ENCODE measurements at regions of chr17 and their contacts with region 1.

Region 1: GRCh38 chr17:48878918-48879898 is 13.4 kb upstream of the ATP5MC1 start:
- DNase-seq: peak; percentile 81
- H3K27ac ChIP-seq: no peak overlapping the region
- CTCF ChIP-seq: peak; percentile 95

Region 2: DNA sequence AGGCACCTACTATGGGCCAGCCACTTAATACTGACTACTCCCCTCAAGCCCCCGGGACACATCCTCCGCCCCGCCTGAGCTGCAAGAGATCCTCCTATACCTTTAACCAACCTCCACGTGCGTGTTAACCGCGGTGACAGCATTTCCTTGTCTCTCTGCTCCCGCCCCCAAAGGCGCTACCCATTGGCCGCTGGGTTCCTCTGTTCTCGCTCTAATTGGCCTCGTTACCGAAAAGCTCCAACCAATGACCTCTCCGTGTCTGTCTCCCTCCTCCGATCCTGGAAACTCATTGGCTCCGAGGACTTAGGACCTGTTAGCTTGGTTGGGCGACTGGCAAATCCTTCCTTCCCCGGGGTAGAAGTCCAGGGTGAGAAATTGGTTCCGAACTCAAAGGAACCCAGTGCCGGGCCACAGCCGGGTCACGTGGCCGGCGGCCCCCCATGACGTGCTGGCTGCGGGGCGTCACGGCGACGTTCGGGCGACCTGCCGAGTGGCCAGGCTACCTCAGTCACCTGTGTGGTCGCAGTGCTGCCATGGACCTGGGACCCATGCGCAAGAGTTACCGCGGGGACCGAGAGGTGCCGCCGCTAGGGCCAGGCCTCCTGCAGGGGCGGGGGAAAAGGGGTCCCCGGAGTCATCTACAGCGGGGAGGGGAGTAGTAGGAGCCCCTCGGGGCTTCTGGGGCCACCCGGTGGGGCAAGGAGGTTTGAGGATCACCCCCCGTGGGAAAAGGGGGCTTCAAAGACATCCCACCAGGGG is 937.8 kb before region 1 on chr17 and contains the start of gene PNPO:
- CTCF ChIA-PET with region 1: no interaction called
- POLR2A ChIA-PET with region 1: no interaction called
- DNase-seq: peak; percentile 99
- H3K27ac ChIP-seq: peak within 1 kb of the TSS; percentile 84
- CTCF ChIP-seq: no peak

Region 3: DNA sequence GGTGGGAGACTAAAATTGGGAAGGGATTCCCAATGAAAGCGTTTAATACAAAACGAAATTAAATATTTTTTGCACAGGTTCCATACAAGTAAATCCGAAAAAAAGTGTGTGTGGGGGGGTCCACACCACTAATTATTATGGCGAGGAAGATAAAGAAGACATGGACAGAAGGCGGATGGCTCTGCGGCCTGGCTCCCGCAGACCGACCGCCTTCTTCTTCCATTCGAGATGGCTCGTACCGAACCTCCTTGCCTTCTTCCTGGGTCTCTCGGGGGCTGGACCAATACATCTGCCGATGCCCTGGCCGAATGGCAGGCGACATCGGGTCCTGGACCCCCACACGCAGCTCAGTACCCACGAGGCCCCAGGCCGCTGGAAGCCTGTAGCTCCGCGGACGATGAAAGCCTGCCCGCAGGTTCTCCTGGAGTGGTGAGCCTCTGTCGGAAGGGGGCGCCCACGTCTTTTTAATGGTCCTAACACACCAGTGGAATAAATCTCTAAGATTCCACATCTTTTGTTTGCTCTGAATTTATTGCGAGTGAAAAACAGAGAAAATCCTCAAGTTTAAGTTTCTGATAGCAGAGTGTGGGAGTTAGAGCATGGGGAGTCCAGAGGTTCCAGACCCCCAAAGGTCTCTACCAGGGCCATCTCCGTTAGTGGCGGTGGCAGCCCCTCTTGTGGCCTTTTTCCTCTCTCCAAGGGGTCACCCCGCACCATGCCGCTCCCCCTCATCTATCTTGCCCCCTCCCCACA is 154.8 kb before region 1 on chr17:
- CTCF ChIA-PET with region 1: interaction called, 16 read pairs
- POLR2A ChIA-PET with region 1: no interaction called
- DNase-seq: peak; percentile 60
- H3K27ac ChIP-seq: no peak overlapping the region
- CTCF ChIP-seq: peak; percentile 87

Region 4: DNA sequence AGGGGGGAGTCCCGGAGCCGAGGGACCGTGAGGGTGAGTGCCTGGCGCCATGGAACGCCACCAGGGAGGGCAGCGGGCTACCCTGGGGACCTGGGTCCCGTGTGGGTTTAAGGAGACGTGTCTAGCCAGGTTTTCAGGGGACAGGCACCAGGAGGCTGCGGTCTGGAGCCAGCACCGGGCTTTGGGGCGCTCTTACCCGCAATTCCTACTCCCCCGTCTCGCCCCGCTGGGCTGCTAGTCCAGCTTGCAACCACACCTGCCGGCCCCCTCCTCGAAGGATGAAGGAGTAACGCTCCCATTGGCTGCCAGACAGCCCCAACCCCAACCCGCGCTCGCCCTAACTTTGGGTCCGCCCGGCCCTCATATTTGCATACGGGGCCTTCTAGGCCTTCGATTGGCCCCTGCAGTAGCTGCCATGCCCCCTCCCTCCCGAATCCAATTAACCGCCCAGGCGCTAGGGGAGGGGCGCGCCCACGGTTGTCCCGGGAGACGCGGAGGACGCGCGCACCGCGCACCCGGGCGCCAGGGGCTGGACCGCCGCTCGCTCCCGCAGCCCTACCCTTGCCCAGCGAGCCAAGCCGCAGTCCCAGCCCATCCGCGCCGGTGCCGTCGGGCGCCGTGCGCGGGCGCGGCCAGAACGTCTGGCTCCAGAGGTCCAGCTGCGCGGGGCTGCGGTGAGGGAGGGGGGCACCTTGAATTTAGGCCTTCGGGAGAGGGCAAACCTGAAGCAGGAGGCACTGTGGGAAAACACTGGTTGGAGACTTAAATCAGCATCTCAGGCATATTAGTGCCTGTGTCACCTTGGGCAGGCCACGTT is 62.2 kb before region 1 on chr17 and contains the start of gene TTLL6:
- CTCF ChIA-PET with region 1: interaction called, 32 read pairs
- POLR2A ChIA-PET with region 1: no interaction called
- DNase-seq: peak; percentile 92
- H3K27ac ChIP-seq: no peak within 1 kb of the TSS
- CTCF ChIP-seq: no peak

Region 5: DNA sequence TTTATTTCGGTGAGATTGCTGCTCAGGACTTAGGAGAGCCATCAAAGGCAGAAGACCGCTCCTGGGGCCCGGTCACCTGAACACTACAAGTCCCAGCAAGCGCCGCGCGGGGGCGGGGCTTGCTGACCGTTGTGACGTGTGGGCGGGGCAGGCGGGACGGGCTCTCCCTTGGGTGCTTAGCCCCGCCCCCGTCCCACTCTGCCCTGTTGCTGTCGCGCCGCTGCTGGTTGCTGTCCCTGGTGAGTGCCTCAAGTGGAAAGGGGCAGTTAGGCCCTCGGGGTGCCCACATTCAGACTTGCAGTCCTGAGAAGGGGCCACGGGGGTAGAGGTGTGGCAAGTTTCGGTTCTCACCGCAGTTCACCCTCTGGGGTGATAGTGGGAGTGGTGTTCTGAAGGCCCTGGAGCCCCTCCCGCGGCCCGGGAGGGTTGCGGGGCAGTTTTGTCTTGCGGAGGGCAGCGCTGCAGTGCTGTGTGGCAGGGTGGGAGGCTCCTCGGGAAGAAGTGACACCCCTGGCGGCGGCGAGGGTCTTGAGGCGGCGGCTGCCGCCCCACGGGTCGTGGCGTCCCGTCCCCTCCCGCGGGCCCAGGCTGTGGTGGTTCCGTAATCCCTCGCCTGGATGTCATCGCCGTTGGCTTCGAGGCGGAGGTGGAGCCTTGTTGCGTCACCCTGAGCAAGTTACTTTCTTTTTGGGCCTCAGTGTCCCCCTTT is 48.2 kb before region 1 on chr17 and contains the start of gene CALCOCO2:
- CTCF ChIA-PET with region 1: interaction called, 11 read pairs
- POLR2A ChIA-PET with region 1: no interaction called
- DNase-seq: peak; percentile 93
- H3K27ac ChIP-seq: peak within 1 kb of the TSS; percentile 80
- CTCF ChIP-seq: no peak

Region 6: DNA sequence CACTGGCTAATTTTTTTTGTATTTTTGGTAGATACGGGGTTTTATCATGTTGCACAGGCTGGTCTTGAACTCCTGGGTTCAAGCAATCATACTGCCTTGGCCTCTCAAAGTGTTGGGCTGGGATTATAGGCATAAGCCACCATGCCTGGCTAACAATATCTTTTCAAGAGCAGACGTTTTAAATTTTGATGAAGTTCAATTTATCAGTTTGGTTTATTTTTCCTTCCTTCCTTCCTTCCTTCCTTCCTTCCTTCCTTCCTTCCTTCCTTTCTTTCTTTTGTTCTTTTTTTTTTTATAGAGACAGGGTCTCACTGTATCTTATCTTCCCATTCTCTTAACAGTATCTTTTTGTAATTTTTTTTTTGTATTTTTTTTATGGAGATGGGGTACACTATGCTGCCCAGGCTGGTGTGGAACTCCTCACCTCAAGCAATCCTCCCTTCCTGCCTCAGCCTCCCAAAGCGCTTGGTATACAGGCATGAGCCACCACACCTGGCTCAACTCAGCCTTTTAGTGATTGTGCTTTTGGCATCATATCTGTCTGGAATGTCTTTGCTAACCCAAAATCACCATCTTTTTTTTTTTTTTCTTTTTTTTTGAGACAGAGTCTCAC is 102.8 kb after region 1 on chr17:
- CTCF ChIA-PET with region 1: no interaction called
- POLR2A ChIA-PET with region 1: no interaction called
- DNase-seq: no peak
- H3K27ac ChIP-seq: no peak overlapping the region
- CTCF ChIP-seq: no peak

Measured in RWPE1 (cell line).